MCF 10A (cell line): ENCODE measurements at regions of chr11 and their contacts with region 1.

Region 1: GRCh38 chr11:20671856-20672546 is 2.6 kb downstream of the NELL1 start:
- DNase-seq: peak; percentile 21
- H3K4me3 Mint-ChIP-seq: no peak overlapping the region
- H3K27ac Mint-ChIP-seq: no peak overlapping the region
- H3K4me1 Mint-ChIP-seq: no peaks in the 10 kb centered on the region
- H3K27me3 Mint-ChIP-seq: peaks cover 56% of the 10 kb centered on the region
- CTCF ChIP-seq: no peak

Region 2: GRCh38 chr11:20658135-20658534 is 13.9 kb before region 1 on chr11:
- CTCF ChIA-PET with region 1: interaction called, 16 read pairs
- POLR2A ChIA-PET with region 1: no interaction called
- intact Hi-C with region 1: no loop called
- DNase-seq: no peak
- H3K4me3 Mint-ChIP-seq: no peak overlapping the region
- H3K27ac Mint-ChIP-seq: no peak overlapping the region
- H3K4me1 Mint-ChIP-seq: no peaks in the 10 kb centered on the region
- H3K27me3 Mint-ChIP-seq: peaks cover 51% of the 10 kb centered on the region
- CTCF ChIP-seq: no peak